ENCODE measurements at regions of chr4 and their contacts with region 1.

Region 1: GRCh38 chr4:101730291-101731117 is 60.0 kb upstream of the BANK1 start:
- DNase-seq: peak; percentile 50
- H3K4me3 ChIP-seq: no peak overlapping the region; a peak in 1 of 4 replicates
- H3K27ac ChIP-seq: no peak overlapping the region
- H3K4me1 ChIP-seq: no peaks in the 10 kb centered on the region
- H3K27me3 ChIP-seq: no peaks in the 10 kb centered on the region
- CTCF ChIP-seq: peak; percentile 70
- EP300 ChIP-seq: no peak
- RAD21 ChIP-seq: peak; percentile 86

Region 2: GRCh38 chr4:101347557-101348366 is 382.7 kb before region 1 on chr4:
- CTCF ChIA-PET with region 1: interaction called, 18 read pairs
- POLR2A ChIA-PET with region 1: no interaction called
- DNase-seq: peak; percentile 98
- H3K4me3 ChIP-seq: peak overlapping the region; percentile 88 to 99
- H3K27ac ChIP-seq: peak overlapping the region; percentile 95 to 96
- H3K4me1 ChIP-seq: peaks cover 14 to 23% of the 10 kb centered on the region in 2 experiments
- H3K27me3 ChIP-seq: no peaks in the 10 kb centered on the region
- CTCF ChIP-seq: no peak
- EP300 ChIP-seq: no peak
- RAD21 ChIP-seq: no peak; the same call in 1 of the 2 replicates

Region 3: GRCh38 chr4:101458914-101459313 is 271.6 kb before region 1 on chr4:
- CTCF ChIA-PET with region 1: no interaction called
- POLR2A ChIA-PET with region 1: no interaction called
- DNase-seq: no peak
- H3K4me3 ChIP-seq: no peak overlapping the region
- H3K27ac ChIP-seq: no peak overlapping the region
- H3K4me1 ChIP-seq: peaks cover 0 to 3% of the 10 kb centered on the region in 2 experiments; a peak in 1 of 4 replicates
- H3K27me3 ChIP-seq: no peaks in the 10 kb centered on the region
- CTCF ChIP-seq: no peak
- EP300 ChIP-seq: no peak
- RAD21 ChIP-seq: no peak

Region 4: GRCh38 chr4:101761431-101761830 is 30.9 kb after region 1 on chr4:
- CTCF ChIA-PET with region 1: no interaction called
- POLR2A ChIA-PET with region 1: no interaction called
- DNase-seq: no peak
- H3K4me3 ChIP-seq: no peak overlapping the region
- H3K27ac ChIP-seq: no peak overlapping the region
- H3K4me1 ChIP-seq: no peaks in the 10 kb centered on the region
- H3K27me3 ChIP-seq: no peaks in the 10 kb centered on the region
- CTCF ChIP-seq: no peak
- EP300 ChIP-seq: no peak
- RAD21 ChIP-seq: no peak

Region 5: DNA sequence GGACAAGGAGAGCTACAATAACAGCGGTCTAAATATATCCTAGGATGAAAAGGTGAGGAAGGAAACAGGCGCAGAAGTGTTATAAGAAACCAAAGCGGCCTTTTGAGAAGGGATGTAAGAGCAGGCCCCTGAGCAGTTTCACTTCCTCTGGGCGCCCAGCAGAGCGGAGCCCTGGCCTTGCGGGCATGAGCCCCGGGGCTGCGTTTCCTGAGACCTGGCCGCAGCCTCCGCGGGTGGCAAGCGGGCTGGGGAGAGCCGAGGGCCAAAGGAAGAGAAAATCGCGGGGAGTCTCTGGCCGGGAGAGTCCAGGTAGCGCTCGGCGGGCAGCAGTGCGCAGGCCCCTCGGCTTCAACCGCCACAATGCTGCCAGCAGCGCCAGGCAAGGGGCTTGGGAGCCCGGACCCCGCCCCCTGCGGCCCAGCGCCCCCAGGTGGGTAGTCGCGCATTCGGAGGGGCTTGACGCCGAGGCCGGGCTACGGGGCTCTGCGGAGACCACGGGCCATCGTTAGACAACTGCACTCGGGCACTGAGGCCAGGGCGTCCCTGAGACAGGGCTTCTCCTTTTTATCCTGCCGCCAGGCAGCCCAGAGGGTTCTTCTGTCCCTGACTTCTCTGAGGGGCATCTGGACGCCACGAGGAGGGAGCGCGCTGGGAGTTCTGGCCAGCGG is 60.2 kb after region 1 on chr4 and contains the start of gene BANK1:
- CTCF ChIA-PET with region 1: no interaction called
- POLR2A ChIA-PET with region 1: no interaction called
- DNase-seq: peak; percentile 11
- H3K4me3 ChIP-seq: no peak within 1 kb of the TSS
- H3K27ac ChIP-seq: no peak within 1 kb of the TSS
- H3K4me1 ChIP-seq: no peaks in the 10 kb centered on the region; a peak in 1 of 4 replicates
- H3K27me3 ChIP-seq: no peaks in the 10 kb centered on the region
- CTCF ChIP-seq: no peak
- EP300 ChIP-seq: no peak
- RAD21 ChIP-seq: no peak
- polyA plus RNA-seq, gene BANK1: 0.05 TPM in 1 of 2 replicates, not detected in the other

Region 6: DNA sequence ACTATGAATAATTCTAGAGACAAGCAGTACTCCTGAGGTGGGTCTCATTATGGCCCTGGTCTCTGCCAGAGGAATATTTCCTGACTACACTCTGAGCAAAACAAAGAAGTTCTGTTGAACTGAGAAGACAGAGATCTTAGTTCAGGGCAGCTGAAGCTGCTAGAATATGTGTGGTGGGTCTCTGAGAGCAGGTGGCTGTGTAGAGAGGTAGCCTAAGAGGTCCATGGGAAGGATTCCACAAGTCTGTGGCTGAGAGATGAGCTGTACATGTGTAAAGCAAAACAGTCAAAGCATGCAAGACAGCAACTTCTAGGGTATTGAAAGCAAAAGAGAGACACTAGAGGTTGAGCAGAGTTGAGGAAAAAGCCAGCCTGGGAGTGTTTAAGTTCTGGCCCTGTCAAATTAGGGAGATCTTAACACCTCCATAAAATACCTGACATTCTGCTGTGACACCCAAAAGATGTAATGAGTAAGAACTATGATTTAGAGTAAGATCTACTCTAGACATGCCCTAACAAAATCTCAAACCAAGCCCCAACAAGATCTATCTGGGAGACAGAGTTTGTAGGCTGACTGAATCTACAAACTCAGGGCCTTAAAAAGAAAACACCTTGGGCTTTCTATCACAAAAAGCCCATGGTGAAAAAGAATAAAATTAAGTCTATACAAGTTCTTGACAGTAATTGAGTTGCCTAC is 334.4 kb after region 1 on chr4:
- CTCF ChIA-PET with region 1: no interaction called
- POLR2A ChIA-PET with region 1: no interaction called
- DNase-seq: no peak
- H3K4me3 ChIP-seq: no peak overlapping the region
- H3K27ac ChIP-seq: no peak overlapping the region
- H3K4me1 ChIP-seq: no peaks in the 10 kb centered on the region
- H3K27me3 ChIP-seq: no peaks in the 10 kb centered on the region
- CTCF ChIP-seq: no peak
- EP300 ChIP-seq: no peak
- RAD21 ChIP-seq: no peak

Measured in SK-N-SH (cell line).